Panc1 (cell line): ENCODE measurements at regions of chr19 and their contacts with region 1.

Region 1: DNA sequence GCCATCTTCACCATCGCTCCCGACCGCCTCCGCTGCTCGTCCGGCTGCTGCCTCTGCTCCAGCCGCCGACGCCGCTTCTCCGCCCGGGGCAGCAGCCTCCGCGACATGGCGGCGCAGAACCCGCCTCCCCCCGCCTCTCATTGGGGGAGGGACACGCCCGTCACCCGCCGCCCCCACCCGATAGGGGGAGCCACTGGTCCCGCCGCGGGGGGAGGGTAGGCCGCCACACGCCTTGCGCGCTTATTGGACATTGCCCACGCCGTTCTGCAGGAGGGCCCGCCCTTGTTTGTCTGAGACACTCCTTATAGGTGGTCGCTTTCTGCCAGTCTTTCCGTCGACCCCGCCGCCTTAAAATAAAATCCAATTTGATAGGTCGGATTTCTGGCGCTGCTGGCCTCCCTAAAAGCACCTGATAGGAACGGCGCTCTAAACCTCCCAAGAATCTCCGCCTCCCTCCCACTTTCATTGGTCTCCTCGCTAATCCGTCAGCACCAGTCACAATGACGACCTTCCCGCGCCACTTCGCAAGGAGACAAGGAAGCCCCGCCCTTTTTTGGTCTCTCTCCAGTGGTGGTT is at the start of gene HNRNPL:
- DNase-seq: peak; percentile 100
- ATAC-seq: peak; percentile 75
- H3K4me3 ChIP-seq: peak within 1 kb of the TSS; percentile 61 to 70
- H3K27ac ChIP-seq: peak within 1 kb of the TSS; percentile 99
- H3K4me1 ChIP-seq: peaks cover 52% of the 10 kb centered on the region
- H3K27me3 ChIP-seq: no peaks in the 10 kb centered on the region
- CTCF ChIP-seq: no peak
- total RNA-seq, gene HNRNPL: 749 TPM

Region 2: GRCh38 chr19:38506723-38507550 is 343.0 kb before region 1 on chr19:
- CTCF ChIA-PET with region 1: no interaction called
- POLR2A ChIA-PET with region 1: no interaction called
- in situ Hi-C with region 1: no loop called
- intact Hi-C with region 1: loop called (anchors 10 kb)
- DNase-seq: peak; percentile 100
- ATAC-seq: peak; percentile 86
- H3K4me3 ChIP-seq: peak overlapping the region; percentile 29 to 64
- H3K27ac ChIP-seq: peak overlapping the region; percentile 58
- H3K4me1 ChIP-seq: peaks cover 8% of the 10 kb centered on the region
- H3K27me3 ChIP-seq: 0 out of 2 replicates have a peak, but pooled peaks cover 3% of the 10 kb centered on the region
- CTCF ChIP-seq: no peak

Region 3: GRCh38 chr19:38831142-38831605 is 18.8 kb before region 1 on chr19:
- CTCF ChIA-PET with region 1: no interaction called
- POLR2A ChIA-PET with region 1: interaction called, 17 read pairs
- in situ Hi-C with region 1: no loop called
- intact Hi-C with region 1: no loop called
- DNase-seq: no peak
- ATAC-seq: peak; percentile 59
- H3K4me3 ChIP-seq: peak overlapping the region; percentile 51 to 78
- H3K27ac ChIP-seq: peak overlapping the region; percentile 97
- H3K4me1 ChIP-seq: peaks cover 55% of the 10 kb centered on the region
- H3K27me3 ChIP-seq: no peaks in the 10 kb centered on the region
- CTCF ChIP-seq: no peak

Region 4: DNA sequence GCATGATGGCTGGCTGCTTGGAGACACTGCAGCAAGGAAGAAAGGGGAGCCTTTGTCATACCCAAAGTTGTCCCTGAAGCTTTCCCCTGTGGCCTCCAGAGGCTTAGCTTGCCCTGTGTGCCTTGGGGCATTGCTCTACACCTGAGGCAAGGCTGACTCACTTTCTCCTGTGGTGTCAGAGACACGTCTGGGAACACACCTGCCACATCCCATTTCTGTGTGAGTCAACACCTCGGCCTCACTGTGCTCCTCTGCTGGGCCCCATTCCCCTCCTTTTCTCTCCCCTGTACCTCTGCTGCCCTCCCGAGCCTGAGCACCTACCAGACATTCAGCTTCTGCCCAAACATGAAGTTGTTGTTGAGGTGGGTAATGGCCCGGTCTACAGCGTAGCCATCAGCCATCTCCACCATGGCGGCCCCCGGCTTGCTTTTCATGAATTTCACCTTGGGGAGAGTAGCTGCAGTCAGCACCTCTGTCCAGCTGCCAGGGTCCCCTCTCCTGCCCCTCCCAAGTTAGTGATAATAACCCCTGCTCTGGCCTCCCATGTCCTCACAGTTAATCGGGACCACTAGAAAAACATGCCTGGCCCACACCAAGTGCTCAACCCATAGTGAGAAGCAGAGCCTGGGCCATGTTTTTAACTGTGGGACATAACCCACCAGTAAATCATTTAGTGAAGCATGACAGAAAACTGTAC is 11.2 kb before region 1 on chr19:
- CTCF ChIA-PET with region 1: interaction called, 4 read pairs
- POLR2A ChIA-PET with region 1: interaction called, 17 read pairs
- in situ Hi-C with region 1: no loop called
- intact Hi-C with region 1: no loop called
- DNase-seq: no peak
- ATAC-seq: peak; percentile 39
- H3K4me3 ChIP-seq: no peak overlapping the region
- H3K27ac ChIP-seq: peak overlapping the region; percentile 86
- H3K4me1 ChIP-seq: peaks cover 98% of the 10 kb centered on the region
- H3K27me3 ChIP-seq: no peaks in the 10 kb centered on the region
- CTCF ChIP-seq: no peak

Region 5: DNA sequence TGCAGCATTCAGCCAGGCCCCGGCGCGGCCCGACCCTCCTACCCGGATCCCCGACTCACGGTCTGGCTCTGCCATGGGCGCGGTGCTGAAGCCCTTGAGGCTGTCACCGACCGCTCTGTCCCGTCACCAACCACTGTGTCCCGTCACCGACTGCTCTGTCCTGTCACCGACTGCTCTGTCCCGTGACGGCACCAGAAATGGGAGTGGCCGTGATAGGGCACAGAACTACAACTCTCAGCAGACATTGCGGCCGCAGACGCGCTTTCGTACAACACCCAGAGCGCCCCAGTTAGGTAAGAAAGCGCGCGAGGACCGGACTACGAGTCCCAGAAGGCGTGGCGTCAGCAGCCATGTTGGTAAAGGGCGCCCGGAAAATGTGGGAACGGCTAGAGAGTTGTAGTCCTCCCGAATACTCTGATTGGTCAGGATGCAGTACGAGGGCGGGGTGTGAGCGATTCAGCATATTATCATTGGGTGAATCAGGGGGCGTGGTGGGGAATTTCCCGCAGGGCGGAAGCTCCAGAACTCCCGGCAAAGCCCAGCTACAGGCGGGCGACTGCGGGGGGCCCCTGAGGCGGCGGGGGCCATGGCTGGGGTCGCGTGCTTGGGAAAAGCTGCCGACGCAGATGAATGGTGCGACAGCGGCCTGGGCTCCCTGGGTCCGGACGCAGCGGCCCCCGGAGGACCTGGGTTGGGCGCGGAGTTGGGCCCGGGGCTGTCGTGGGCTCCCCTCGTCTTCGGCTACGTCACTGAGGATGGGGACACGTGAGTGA is 49.7 kb after region 1 on chr19 and contains the starts of genes NFKBIB and SIRT2:
- CTCF ChIA-PET with region 1: interaction called, 4 read pairs
- POLR2A ChIA-PET with region 1: interaction called, 30 read pairs
- in situ Hi-C with region 1: no loop called
- intact Hi-C with region 1: loop called (anchors 5 kb)
- DNase-seq: peak; percentile 100
- ATAC-seq: peak; percentile 97
- H3K4me3 ChIP-seq: peak within 1 kb of the TSS; percentile 55 to 75
- H3K27ac ChIP-seq: peak within 1 kb of the TSS; percentile 89
- H3K4me1 ChIP-seq: peaks cover 21% of the 10 kb centered on the region
- H3K27me3 ChIP-seq: no peaks in the 10 kb centered on the region
- CTCF ChIP-seq: no peak
- total RNA-seq, gene NFKBIB: 185 TPM
- total RNA-seq, gene SIRT2: 162 TPM

Region 6: GRCh38 chr19:38942471-38943181 is 92.7 kb after region 1 on chr19:
- CTCF ChIA-PET with region 1: interaction called, 3 read pairs
- POLR2A ChIA-PET with region 1: interaction called, 10 read pairs
- in situ Hi-C with region 1: loop called (anchors 10 kb)
- intact Hi-C with region 1: no loop called
- DNase-seq: no peak
- ATAC-seq: peak; percentile 36
- H3K4me3 ChIP-seq: no peak overlapping the region
- H3K27ac ChIP-seq: no peak overlapping the region
- H3K4me1 ChIP-seq: no peaks in the 10 kb centered on the region
- H3K27me3 ChIP-seq: no peaks in the 10 kb centered on the region
- CTCF ChIP-seq: no peak

Region 7: GRCh38 chr19:39131235-39131755 is 281.3 kb after region 1 on chr19:
- CTCF ChIA-PET with region 1: no interaction called
- POLR2A ChIA-PET with region 1: no interaction called
- in situ Hi-C with region 1: no loop called
- intact Hi-C with region 1: no loop called
- DNase-seq: no peak
- ATAC-seq: no peak
- H3K4me3 ChIP-seq: no peak overlapping the region
- H3K27ac ChIP-seq: peak overlapping the region; percentile 5
- H3K4me1 ChIP-seq: peaks cover 68% of the 10 kb centered on the region
- H3K27me3 ChIP-seq: no peaks in the 10 kb centered on the region
- CTCF ChIP-seq: no peak